ENCODE measurements at regions of chr20 and their contacts with region 1.

Region 1: DNA sequence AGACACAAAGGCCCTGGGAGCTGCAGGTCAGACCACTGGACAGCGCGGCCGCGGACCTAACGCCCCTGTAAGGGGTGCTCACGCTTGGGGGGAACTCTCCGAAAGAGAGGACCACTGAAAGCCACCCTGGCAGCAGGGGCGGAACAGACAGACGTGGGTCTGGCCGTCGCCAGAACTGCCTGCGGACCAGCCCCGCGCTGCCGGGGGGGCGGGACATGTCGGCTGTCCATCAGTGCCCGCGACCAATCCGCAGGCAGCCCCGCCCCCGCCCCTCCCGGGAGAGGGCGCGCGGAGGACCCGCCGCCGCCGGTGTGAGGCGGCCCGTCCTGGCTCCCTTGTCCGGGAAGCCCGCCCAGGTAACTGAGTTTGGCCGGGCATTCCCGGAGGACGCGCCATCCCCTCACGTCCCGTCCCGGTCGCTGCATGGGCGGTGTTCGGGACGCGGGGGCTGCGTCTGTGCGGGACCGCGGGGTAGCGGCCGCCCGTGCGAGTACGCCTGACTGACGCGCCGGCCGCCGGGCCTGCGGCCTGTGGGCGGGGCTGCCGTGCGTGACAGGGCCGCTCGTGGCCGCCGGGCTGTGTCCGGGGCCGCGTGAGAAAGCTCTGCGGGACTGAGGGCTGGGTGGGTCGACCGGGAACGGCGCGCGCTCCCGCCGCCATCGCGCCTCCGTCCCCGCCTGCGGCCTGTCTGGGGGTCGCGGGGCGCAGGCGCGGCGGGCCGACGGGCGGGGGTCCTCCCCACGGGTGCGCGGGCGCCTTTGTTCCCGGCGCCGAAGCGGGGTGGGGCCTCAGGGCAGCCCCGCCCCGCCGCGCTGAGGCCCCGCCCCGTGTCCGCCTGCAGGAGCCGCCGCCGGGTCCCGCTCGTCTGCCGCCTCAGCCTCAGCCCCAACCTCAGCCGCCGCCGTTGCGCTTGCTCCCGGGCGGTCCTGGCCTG is at the start of gene PLCG1:
- DNase-seq: peak; percentile 89
- ATAC-seq: peak; percentile 75
- H3K4me3 ChIP-seq: peak within 1 kb of the TSS; percentile 7 to 83 (median 71)
- H3K4me3 Mint-ChIP-seq: peak within 1 kb of the TSS; percentile 93
- H3K27ac ChIP-seq: peak within 1 kb of the TSS; percentile 45 to 73
- H3K27ac Mint-ChIP-seq: peak within 1 kb of the TSS; percentile 91
- H3K4me1 ChIP-seq: peaks cover 43 to 62% of the 10 kb centered on the region in 2 donors
- H3K4me1 Mint-ChIP-seq: peaks cover 66% of the 10 kb centered on the region
- H3K27me3 ChIP-seq: no peaks in the 10 kb centered on the region
- H3K27me3 Mint-ChIP-seq: no peaks in the 10 kb centered on the region
- CTCF ChIP-seq: no peak
- total RNA-seq, gene PLCG1: 98.7 and 106 TPM in 2 replicates

Region 2: GRCh38 chr20:40902661-40903060 is 234.3 kb before region 1 on chr20:
- CTCF ChIA-PET with region 1: no interaction called
- POLR2A ChIA-PET with region 1: no interaction called
- intact Hi-C with region 1: no loop called
- DNase-seq: no peak
- ATAC-seq: no peak
- H3K4me3 ChIP-seq: no peak overlapping the region
- H3K4me3 Mint-ChIP-seq: no peak overlapping the region
- H3K27ac ChIP-seq: no peak overlapping the region
- H3K27ac Mint-ChIP-seq: no peak overlapping the region
- H3K4me1 ChIP-seq: no peaks in the 10 kb centered on the region
- H3K4me1 Mint-ChIP-seq: no peaks in the 10 kb centered on the region
- H3K27me3 ChIP-seq: no peaks in the 10 kb centered on the region
- H3K27me3 Mint-ChIP-seq: no peaks in the 10 kb centered on the region
- CTCF ChIP-seq: no peak

Region 3: GRCh38 chr20:41028348-41029148 is 108.4 kb before region 1 on chr20 and contains the start of gene TOP1:
- CTCF ChIA-PET with region 1: interaction called, 4 read pairs
- POLR2A ChIA-PET with region 1: no interaction called
- intact Hi-C with region 1: loop called (anchors 1 kb)
- DNase-seq: peak; percentile 100
- ATAC-seq: peak; percentile 98
- H3K4me3 ChIP-seq: peak within 1 kb of the TSS; percentile 73 to 94 (median 93)
- H3K4me3 Mint-ChIP-seq: peak within 1 kb of the TSS; percentile 93
- H3K27ac ChIP-seq: peak within 1 kb of the TSS; percentile 71 to 95
- H3K27ac Mint-ChIP-seq: peak within 1 kb of the TSS; percentile 97
- H3K4me1 ChIP-seq: peaks cover 38 to 40% of the 10 kb centered on the region in 2 donors
- H3K4me1 Mint-ChIP-seq: peaks cover 53% of the 10 kb centered on the region
- H3K27me3 ChIP-seq: no peaks in the 10 kb centered on the region
- H3K27me3 Mint-ChIP-seq: no peaks in the 10 kb centered on the region
- CTCF ChIP-seq: no peak
- total RNA-seq, gene TOP1: 44.9 and 45.9 TPM in 2 replicates

Region 4: DNA sequence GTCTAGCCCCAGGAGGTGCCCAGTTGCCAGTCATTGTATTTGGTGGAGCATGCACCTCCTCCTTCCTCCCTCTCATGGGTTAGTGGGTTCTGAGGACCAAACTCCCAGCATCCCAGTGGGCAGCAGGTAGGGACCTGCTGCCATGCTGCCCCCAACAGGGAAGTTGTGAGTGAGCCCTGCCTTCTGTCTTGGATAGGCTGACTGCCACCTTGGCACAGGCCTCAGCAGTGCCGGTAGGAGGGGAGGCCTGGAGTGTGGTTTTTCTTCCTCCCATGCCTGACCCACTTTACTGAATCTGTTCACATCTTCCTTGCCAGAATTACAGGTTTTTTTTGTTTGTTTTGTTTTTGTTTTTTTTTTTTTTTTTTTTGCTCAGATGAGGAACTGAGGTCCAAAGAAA is 24.9 kb after region 1 on chr20:
- CTCF ChIA-PET with region 1: interaction called, 122 read pairs
- POLR2A ChIA-PET with region 1: interaction called, 8 read pairs
- intact Hi-C with region 1: loop called (anchors 1 kb)
- DNase-seq: no peak
- ATAC-seq: no peak
- H3K4me3 ChIP-seq: no peak overlapping the region
- H3K4me3 Mint-ChIP-seq: no peak overlapping the region
- H3K27ac ChIP-seq: no peak overlapping the region
- H3K27ac Mint-ChIP-seq: no peak overlapping the region
- H3K4me1 ChIP-seq: peaks cover 19 to 32% of the 10 kb centered on the region in 2 donors
- H3K4me1 Mint-ChIP-seq: peaks cover 30% of the 10 kb centered on the region
- H3K27me3 ChIP-seq: peaks cover 0 to 9% (median under 1%) of the 10 kb centered on the region in 4 experiments
- H3K27me3 Mint-ChIP-seq: no peaks in the 10 kb centered on the region
- CTCF ChIP-seq: no peak

Region 5: GRCh38 chr20:41232973-41233926 is 96.3 kb after region 1 on chr20:
- CTCF ChIA-PET with region 1: interaction called, 48 read pairs
- POLR2A ChIA-PET with region 1: no interaction called
- intact Hi-C with region 1: loop called (anchors 1 kb)
- DNase-seq: no peak
- ATAC-seq: peak; percentile 41
- H3K4me3 ChIP-seq: no peak overlapping the region
- H3K4me3 Mint-ChIP-seq: peak overlapping the region; percentile 17
- H3K27ac ChIP-seq: no peak overlapping the region
- H3K27ac Mint-ChIP-seq: peak overlapping the region; percentile 8
- H3K4me1 ChIP-seq: peaks cover 9 to 15% of the 10 kb centered on the region in 2 donors
- H3K4me1 Mint-ChIP-seq: peaks cover 26% of the 10 kb centered on the region
- H3K27me3 ChIP-seq: no peaks in the 10 kb centered on the region
- H3K27me3 Mint-ChIP-seq: no peaks in the 10 kb centered on the region
- CTCF ChIP-seq: no peak

Region 6: GRCh38 chr20:41339507-41340326 is 202.8 kb after region 1 on chr20:
- CTCF ChIA-PET with region 1: interaction called, 109 read pairs
- POLR2A ChIA-PET with region 1: interaction called, 3 read pairs
- intact Hi-C with region 1: loop called (anchors 1 kb)
- DNase-seq: peak; percentile 86
- ATAC-seq: peak; percentile 93
- H3K4me3 ChIP-seq: peak overlapping the region in 4 of 5 experiments; percentile 17 to 45 (median 39)
- H3K4me3 Mint-ChIP-seq: peak overlapping the region; percentile 84
- H3K27ac ChIP-seq: no peak overlapping the region
- H3K27ac Mint-ChIP-seq: no peak overlapping the region
- H3K4me1 ChIP-seq: peaks cover 12 to 15% of the 10 kb centered on the region in 2 donors
- H3K4me1 Mint-ChIP-seq: peaks cover 12% of the 10 kb centered on the region
- H3K27me3 ChIP-seq: peaks cover 0 to 20% (median 6%) of the 10 kb centered on the region in 4 experiments
- H3K27me3 Mint-ChIP-seq: peaks cover 15% of the 10 kb centered on the region
- CTCF ChIP-seq: peak; percentile 100

Region 7: GRCh38 chr20:41693136-41693979 is 556.4 kb after region 1 on chr20:
- CTCF ChIA-PET with region 1: no interaction called
- POLR2A ChIA-PET with region 1: no interaction called
- intact Hi-C with region 1: loop called (anchors 5 kb)
- DNase-seq: peak; percentile 92
- ATAC-seq: peak; percentile 79
- H3K4me3 ChIP-seq: peak overlapping the region; percentile 84 to 96 (median 96)
- H3K4me3 Mint-ChIP-seq: peak overlapping the region; percentile 88
- H3K27ac ChIP-seq: peak overlapping the region; percentile 81 to 86
- H3K27ac Mint-ChIP-seq: peak overlapping the region; percentile 93
- H3K4me1 ChIP-seq: peaks cover 8 to 17% of the 10 kb centered on the region in 2 donors
- H3K4me1 Mint-ChIP-seq: peaks cover 13% of the 10 kb centered on the region
- H3K27me3 ChIP-seq: peaks cover 0 to 4% (median 2%) of the 10 kb centered on the region in 4 experiments
- H3K27me3 Mint-ChIP-seq: peaks cover 7% of the 10 kb centered on the region
- CTCF ChIP-seq: peak; percentile 67

Measured in B cell (primary cell).